ENCODE measurements at regions of chr16 and their contacts with region 1.

Region 1: DNA sequence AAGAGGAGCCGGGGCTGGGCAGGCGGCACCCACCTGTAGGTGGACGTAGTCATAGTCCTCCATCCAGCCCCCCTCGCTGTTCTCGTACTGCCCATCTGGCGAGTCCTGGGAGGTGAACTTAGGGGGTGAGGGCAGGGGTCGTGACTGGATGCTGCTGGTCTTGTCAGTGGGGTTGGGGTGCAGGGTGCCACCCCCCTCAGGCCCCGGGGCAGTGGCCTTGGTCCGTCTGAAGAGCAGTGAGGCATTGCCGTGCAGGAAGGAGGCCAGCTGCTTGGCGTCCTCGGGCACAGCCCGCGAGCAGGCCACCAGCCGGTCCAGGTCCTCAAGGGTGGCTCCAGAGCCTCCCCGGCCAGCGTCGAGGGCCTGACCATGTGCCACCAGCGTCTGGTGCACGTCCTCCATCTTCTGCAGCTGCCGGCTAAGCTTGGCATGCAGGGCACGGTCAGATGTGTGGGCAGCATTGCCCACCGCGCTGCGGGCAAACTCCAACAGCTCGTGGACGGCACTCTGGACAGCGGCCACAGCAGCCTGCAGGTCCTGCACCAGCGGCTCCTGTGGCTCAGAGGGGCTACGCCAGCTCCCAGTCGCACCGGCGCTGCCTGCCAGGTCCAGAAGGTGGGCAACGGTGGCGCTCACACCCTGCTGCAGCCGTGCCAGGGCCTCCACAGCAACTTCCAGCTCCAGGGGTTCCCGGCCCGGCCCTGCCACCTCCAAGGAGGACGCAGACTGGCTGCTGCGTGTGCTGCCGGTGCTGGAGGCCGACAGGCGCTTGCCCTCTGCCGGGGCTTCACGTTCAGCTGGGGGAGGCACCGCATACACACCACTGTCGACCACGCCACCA is 16.3 kb downstream of the CTRB1 start:
- DNase-seq: no peak
- ATAC-seq: no peak

Region 2: GRCh38 chr16:75385507-75386152 is 150.6 kb after region 1 on chr16:
- intact Hi-C with region 1: loop called (anchors 1 to 5 kb)
- DNase-seq: no peak
- ATAC-seq: peak in 1 of 2 donors; percentile 46